IMR-90 (cell line): ENCODE measurements at regions of chr5 and their contacts with region 1.

Region 1: GRCh38 chr5:112025757-112026156 is 268.8 kb upstream of the NREP start:
- DNase-seq: no peak
- ATAC-seq: no peak
- H3K4me3 ChIP-seq: no peak overlapping the region
- H3K27ac ChIP-seq: no peak overlapping the region
- H3K4me1 ChIP-seq: no peaks in the 10 kb centered on the region; the same call in 1 of the 2 replicates
- H3K27me3 ChIP-seq: no peaks in the 10 kb centered on the region
- CTCF ChIP-seq: no peak
- POLR2A ChIP-seq: no peak
- RAD21 ChIP-seq: no peak

Region 2: DNA sequence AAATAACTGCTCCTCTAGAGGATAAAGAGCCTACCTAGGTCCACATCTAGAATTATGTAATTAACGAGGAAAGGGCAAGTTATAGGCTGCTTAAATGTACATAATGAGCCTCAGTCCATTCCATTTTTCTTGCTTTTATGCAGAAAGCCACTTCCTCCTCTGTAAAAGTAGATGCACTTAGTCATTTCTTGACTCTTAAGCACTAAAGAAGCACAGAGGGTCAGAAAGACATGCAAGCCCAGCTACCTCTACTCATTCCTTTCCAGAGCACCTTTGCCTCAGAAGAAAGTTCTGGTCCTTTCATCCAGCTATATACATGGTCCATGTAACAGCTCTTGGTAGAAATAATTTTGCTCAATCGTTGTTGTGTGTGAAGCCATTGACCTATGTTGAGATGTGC is 39.2 kb after region 1 on chr5:
- CTCF ChIA-PET with region 1: no interaction called
- POLR2A ChIA-PET with region 1: no interaction called
- dilution Hi-C with region 1: no loop called
- in situ Hi-C with region 1: no loop called
- intact Hi-C with region 1: loop called (anchors 5 kb)
- DNase-seq: no peak
- ATAC-seq: no peak
- H3K4me3 ChIP-seq: no peak overlapping the region
- H3K27ac ChIP-seq: no peak overlapping the region
- H3K4me1 ChIP-seq: no peaks in the 10 kb centered on the region
- H3K27me3 ChIP-seq: no peaks in the 10 kb centered on the region
- CTCF ChIP-seq: no peak
- POLR2A ChIP-seq: no peak
- RAD21 ChIP-seq: no peak

Region 3: DNA sequence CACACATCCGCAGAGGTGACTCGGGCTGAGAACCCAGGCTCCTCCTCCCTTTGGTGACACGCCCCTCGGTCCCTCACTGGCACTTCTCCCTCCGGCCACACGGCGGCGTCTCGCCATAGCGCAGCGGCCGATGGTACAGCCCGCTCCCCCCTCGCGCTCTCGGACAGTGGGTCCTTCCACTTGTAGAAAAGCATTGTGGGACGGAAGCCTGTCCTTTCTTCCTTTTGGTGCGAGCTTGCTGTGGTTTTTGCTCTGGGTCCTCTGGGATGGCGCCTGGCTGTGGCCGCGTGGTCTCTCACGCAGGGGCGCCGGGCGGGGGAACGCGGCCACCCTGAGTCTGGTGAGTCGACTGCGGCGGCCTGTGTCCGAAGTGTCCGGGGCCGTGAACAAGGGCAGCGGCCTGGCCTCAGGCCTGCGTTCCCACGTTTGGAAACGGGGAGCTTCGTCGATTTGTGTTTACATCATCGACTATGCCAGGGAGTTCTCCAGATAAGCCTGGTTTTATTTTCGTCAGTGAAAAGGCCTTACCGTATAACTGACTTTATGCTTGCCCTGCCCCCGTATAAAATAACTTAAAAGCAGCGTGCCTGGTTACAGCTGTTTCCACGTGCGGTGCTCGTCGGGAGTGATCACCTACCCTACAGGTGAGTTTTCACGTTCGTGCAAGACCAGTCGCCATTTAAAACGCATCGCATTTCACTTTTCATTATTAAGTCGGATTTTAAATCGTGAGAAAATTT is 135.1 kb after region 1 on chr5:
- CTCF ChIA-PET with region 1: no interaction called
- POLR2A ChIA-PET with region 1: no interaction called
- dilution Hi-C with region 1: no loop called
- in situ Hi-C with region 1: no loop called
- intact Hi-C with region 1: no loop called
- DNase-seq: peak; percentile 88
- ATAC-seq: peak; percentile 100
- H3K4me3 ChIP-seq: peak overlapping the region; percentile 80
- H3K27ac ChIP-seq: peak overlapping the region; percentile 74
- H3K4me1 ChIP-seq: no peaks in the 10 kb centered on the region; the same call in 1 of the 2 replicates
- H3K27me3 ChIP-seq: no peaks in the 10 kb centered on the region
- CTCF ChIP-seq: peak; percentile 100
- POLR2A ChIP-seq: peak; percentile 99
- RAD21 ChIP-seq: no peak; the same call in 1 of the 2 replicates